Head of caudate nucleus (tissue), 42 donors: ENCODE measurements at regions of chr5 and their contacts with region 1.

Region 1: DNA sequence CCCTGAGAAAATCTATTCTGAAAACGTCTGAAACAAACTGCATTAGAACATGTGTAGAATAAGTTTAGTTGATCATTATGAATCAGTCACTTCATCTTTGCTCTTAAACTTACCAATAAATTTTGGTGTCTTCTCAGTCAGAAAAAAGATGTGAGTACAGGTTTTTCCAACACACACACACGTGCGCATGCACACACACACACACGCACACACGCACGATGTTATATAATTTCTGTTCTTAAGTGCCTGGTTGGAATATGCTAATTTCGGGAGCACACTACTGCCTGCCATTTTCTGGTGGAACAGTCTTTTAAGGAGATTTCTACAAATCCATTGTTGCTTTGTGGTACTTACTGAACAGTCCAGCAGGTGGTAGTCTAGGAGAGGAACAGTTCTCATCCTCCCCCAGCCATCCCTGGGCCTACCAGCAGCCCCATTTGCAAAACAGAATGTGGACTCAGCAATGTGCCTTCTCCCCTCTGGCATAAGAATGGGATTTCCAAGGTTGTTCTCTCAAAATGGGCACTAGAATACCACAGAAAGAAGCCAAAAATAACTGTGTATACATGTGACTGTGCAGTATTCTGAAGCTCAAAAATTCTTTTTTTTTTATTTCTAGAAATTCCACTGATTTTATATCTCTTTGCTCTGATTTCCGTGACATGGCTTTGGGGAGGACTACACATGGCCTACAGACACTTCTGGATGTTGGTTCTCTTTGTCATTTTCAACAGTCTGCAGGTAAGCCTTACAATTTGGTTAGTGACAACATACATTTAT is 281.3 kb downstream of the ARRDC3 start:
- DNase-seq: peak; percentile 35 to 91 (median 73)

Region 2: GRCh38 chr5:91162534-91163381 is 61.0 kb after region 1 on chr5:
- intact Hi-C with region 1: loop called (anchors 10 kb)
- DNase-seq: peak in 27 of 42 donors; percentile 21 to 85 (median 49)